Posterior vena cava (tissue), 2 donors: ENCODE measurements at regions of chr12 and their contacts with region 1.

Region 1: GRCh38 chr12:98758331-98758730 is 113.2 kb downstream of the APAF1 start:
- DNase-seq: no peak

Region 2: DNA sequence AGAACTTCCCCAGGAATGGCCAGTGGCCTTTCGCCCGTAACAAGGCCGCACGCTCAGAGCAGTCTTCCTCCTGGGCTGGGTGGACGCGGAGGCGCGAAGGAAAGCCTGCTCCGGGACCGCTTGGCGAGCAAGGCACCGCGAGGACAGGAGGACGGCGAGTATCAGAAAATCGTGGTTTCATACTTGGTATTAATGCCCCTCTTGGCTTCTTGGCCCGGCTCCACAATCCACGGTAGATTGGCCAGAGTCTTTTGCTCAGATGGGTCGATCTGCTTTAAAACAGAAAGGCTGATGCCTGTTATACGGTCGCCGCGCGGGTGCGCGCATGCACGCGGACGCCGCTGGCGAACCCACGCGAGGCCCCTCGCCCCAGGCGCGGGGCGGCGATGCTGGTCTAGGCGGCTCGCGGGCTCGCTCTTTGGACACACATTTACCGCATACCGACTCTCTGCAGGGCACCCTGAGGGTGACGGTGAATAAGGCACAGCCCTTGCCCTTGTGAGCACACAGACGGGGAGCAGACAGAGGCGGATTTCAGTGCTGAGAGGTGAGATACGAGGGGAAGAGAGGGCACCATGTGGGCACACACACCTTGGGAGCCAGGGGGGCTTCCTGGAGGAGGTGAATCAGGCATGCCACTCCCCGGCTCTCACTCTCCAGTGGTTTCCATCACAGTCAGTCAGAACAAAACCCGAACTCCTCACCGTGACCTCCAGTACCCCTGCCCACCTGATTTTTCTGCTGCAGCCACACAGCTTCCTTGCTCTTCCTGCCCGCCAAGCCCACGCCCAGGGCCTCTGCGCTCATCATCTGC is 12.5 kb before region 1 on chr12:
- intact Hi-C with region 1: loop called in 1 of 2 experiments (anchors 1 kb)
- DNase-seq: no peak